PC-3 (cell line): ENCODE measurements at regions of chr5 and their contacts with region 1.

Region 1: DNA sequence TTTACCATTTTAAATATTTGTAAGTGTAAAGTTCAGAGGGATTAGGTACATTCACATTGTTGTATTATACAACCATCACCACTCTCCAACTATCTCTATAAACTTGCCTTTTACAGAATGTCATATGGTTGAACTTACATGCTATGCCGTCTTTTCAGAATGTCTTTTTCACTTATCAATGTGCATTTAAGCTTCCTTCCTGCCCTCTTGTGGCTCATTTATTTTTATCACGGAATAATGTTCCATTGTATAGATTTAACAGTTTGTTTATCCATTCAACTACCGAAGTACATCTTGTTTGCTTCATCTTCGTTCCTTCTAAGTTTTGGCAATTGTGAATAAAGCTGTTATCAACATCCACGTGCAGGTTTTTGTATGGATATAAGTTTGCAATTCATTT is 133.3 kb upstream of the C6 start:
- DNase-seq: peak; percentile 66
- ATAC-seq: no peak; the same call in 1 of the 2 replicates
- H3K4me3 ChIP-seq: no peak overlapping the region
- H3K27ac ChIP-seq: no peak overlapping the region
- H3K4me1 ChIP-seq: peaks cover 6% of the 10 kb centered on the region; the same call in 1 of the 2 replicates
- H3K27me3 ChIP-seq: no peaks in the 10 kb centered on the region
- CTCF ChIP-seq: peak; percentile 67

Region 2: DNA sequence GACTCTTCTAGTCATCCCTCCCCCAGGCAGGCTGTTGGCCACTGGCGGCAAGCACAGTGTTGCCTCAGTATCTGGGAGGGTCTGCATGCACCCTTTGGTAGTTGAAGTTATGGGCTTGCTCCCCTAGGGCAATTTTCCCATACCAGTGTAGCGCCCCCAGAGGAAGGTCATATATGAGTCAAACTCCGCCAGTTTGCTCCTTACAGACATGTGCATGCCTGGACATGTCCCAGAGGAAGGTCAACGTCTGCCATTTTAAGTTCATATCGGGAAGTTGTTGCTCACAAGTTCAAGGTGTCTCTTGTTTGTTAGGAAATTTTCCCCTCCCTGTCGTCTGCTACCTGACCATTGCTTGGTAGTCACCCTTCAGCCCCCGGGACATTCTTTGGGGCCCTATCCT is 224.2 kb before region 1 on chr5:
- CTCF ChIA-PET with region 1: no interaction called
- POLR2A ChIA-PET with region 1: no interaction called
- intact Hi-C with region 1: no loop called
- DNase-seq: no peak
- ATAC-seq: no peak
- H3K4me3 ChIP-seq: no peak overlapping the region
- H3K27ac ChIP-seq: no peak overlapping the region
- H3K4me1 ChIP-seq: no peaks in the 10 kb centered on the region
- H3K27me3 ChIP-seq: no peaks in the 10 kb centered on the region
- CTCF ChIP-seq: no peak

Region 3: DNA sequence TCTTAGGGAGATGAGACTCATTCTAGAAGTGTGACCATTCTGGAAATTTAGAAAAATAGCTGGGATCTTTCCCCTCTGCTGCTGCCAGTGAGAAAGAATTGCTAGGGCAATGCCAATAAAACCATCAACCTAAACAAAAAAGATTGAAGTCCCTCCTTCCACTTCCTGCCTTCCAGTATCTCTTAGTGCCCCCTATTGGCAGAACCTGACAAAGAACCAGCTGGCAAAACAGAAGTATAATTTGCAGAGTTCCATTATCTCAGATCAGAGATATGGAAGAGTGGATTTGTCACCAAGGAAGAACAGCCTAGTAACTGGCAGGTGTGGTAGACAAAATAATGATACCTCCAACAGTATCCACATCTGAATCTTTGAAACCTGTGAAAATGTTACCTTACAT is 177.6 kb after region 1 on chr5:
- CTCF ChIA-PET with region 1: no interaction called
- POLR2A ChIA-PET with region 1: no interaction called
- intact Hi-C with region 1: loop called (anchors 1 kb)
- DNase-seq: peak; percentile 43
- ATAC-seq: no peak
- H3K4me3 ChIP-seq: no peak overlapping the region
- H3K27ac ChIP-seq: no peak overlapping the region
- H3K4me1 ChIP-seq: peaks cover 21% of the 10 kb centered on the region
- H3K27me3 ChIP-seq: no peaks in the 10 kb centered on the region
- CTCF ChIP-seq: peak; percentile 58